PC-9 (cell line): ENCODE measurements at regions of chr11 and their contacts with region 1.

Region 1: GRCh38 chr11:64778508-64779346 is at the start of gene SF1:
- DNase-seq: peak; percentile 100
- H3K4me3 ChIP-seq: peak within 1 kb of the TSS; percentile 98
- H3K27ac ChIP-seq: peak within 1 kb of the TSS; percentile 86
- H3K4me1 ChIP-seq: peaks cover 26% of the 10 kb centered on the region
- H3K27me3 ChIP-seq: no peaks in the 10 kb centered on the region
- CTCF ChIP-seq: 0 out of 2 replicates have a peak, but pooled peaks have one; percentile 2
- total RNA-seq, gene SF1: 253 and 336 TPM in 2 replicates

Region 2: GRCh38 chr11:64665411-64665821 is 113.3 kb before region 1 on chr11:
- CTCF ChIA-PET with region 1: no interaction called
- POLR2A ChIA-PET with region 1: no interaction called
- intact Hi-C with region 1: no loop called
- DNase-seq: peak; percentile 53 to 65
- H3K4me3 ChIP-seq: no peak overlapping the region
- H3K27ac ChIP-seq: no peak overlapping the region
- H3K4me1 ChIP-seq: no peaks in the 10 kb centered on the region
- H3K27me3 ChIP-seq: peaks cover 15% of the 10 kb centered on the region
- CTCF ChIP-seq: no peak

Region 3: DNA sequence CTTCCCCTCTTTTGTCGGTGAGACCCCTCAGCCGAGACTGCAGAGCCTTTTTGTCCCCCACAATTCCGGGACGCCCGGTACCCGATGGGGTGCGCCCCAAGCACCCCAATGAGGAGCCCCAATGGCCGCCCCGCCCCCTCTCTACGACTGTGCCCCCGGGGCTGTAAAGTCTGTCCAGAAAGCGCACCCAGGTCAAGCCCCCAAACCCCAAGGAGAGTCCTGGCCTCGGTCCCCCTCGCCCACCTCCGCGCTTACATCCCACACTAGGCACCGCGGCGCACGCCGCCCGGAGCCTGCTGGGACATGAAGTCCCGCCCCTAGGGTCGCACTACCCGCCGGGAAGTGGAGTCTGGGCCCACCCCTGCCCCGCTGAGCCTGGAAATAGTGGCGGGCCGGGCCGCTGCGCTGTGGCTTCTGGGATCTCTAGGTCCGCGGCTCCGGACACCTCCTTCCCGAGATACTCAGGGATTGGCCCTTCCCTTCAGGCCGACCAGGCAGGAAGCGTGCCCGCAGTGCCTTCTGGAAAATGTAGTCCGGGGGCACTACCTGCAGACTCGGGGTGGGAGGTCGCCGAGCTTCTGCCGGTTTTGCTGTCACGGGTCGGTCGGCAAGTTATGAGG is 31.7 kb after region 1 on chr11 and contains the start of gene MEN1:
- CTCF ChIA-PET with region 1: no interaction called
- POLR2A ChIA-PET with region 1: no interaction called
- intact Hi-C with region 1: loop called (anchors 2 kb)
- DNase-seq: peak; percentile 91 to 98
- H3K4me3 ChIP-seq: peak within 1 kb of the TSS; percentile 93
- H3K27ac ChIP-seq: no peak within 1 kb of the TSS
- H3K4me1 ChIP-seq: peaks cover 6% of the 10 kb centered on the region; the same call in 1 of the 2 replicates
- H3K27me3 ChIP-seq: no peaks in the 10 kb centered on the region
- CTCF ChIP-seq: no peak
- total RNA-seq, gene MEN1: 48.7 and 61.6 TPM in 2 replicates

Region 4: DNA sequence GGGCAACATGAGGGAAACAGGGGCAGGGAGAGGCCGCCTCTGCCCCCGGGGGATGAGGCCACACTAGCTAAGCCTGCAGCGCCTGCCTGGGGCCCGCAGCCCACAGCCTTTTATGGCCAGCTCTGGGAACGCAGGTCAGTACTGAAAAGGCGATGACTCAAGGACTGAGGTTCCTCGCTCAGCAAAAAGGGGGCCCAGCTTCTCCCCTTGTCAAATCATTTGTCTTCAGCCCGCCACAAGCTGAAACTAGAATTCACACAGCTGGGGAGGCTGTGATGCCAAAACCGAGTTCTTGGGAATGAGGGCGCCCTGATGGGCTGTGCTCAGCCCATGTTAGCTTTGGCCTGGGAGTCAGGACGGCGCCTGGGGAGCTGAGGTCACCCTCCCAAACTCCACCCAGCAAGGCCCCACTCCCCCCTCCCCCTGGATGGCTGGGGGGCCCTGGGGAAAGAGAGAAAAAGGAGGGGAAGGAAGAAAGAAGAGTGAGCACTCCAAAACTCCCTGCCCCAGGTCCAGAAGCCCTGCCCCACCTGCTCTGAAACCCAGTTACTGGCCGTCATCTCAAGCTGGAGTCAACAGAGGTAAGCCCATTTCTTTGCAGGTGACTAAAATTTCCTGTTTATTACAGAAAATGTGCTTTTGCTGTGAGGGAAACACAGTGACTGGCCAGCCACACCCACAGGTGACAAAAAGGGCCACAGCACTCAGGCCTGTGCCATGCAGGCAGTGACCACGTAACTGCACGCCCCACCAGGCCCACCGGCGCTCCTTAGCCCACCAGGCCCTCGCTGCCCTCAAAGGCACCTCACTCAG is 86.0 kb after region 1 on chr11:
- CTCF ChIA-PET with region 1: interaction called, 3 read pairs
- POLR2A ChIA-PET with region 1: interaction called, 16 read pairs
- intact Hi-C with region 1: no loop called
- DNase-seq: peak in 1 of 2 experiments; percentile 79
- H3K4me3 ChIP-seq: no peak overlapping the region
- H3K27ac ChIP-seq: no peak overlapping the region
- H3K4me1 ChIP-seq: peaks cover 41% of the 10 kb centered on the region
- H3K27me3 ChIP-seq: no peaks in the 10 kb centered on the region
- CTCF ChIP-seq: no peak

Region 5: DNA sequence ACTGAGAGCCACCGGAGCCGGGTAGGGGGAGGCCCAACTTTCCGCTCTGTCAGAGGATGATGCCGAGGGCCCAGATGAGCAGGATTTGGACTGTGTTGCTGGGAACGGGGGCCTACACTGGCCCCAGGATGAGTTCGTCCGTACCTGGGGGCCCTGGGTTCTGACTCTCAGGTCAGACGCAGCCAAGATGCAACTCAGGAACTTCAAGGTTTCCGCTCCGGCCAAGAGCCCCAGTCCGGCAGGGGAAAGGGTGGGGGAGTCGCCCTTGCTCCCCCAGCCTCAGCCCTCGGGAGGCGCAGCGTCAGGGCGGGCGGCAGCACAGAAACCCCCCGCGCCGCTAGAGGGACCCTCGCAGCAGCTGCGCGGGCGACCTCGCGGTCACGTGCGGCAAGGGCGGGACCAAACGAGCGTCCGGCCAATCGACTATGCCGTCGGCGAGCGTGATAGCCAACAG is 235.0 kb after region 1 on chr11:
- CTCF ChIA-PET with region 1: no interaction called
- POLR2A ChIA-PET with region 1: no interaction called
- intact Hi-C with region 1: loop called (anchors 10 kb)
- DNase-seq: peak in 1 of 2 experiments; percentile 80
- H3K4me3 ChIP-seq: peak overlapping the region; percentile 76
- H3K27ac ChIP-seq: peak overlapping the region; percentile 71
- H3K4me1 ChIP-seq: peaks cover 14% of the 10 kb centered on the region
- H3K27me3 ChIP-seq: no peaks in the 10 kb centered on the region
- CTCF ChIP-seq: peak; percentile 75

Region 6: DNA sequence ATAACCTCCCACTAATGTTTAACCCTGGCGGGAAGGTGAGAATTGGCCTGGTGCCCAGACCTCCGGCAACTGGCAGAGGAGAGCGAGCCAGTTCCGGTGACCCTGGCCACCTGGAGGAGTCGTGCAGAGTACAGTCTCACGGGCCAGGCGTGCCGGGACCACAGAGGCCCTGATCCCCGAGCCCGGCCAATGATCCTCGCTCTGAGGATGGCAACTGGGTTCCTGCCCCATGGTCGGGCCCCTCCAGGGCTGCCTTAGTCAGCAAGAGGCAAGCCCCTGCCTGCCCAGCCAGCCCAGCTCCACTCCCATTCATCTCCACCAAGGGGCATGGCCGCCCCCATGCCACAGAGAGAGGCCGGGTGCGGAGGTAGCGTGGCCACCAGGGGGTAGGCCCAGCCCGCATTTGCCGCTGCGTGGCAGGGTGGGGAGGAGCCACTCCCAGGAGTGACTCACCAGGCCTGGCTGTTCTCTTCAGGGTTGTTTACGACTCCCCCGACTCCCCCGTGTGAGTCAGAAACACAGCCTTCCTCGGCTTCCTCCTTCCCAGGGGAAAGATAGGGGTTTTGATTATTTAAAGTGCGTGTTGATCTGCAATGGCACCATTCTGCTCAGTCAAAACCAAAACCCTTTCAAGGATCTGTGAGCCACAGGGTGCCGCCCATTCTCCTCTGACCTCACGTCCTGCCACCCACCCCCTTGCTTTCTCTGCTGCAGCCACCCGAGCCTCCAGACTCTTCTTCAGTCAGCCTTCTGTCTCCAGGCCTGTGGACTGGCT is 603.5 kb after region 1 on chr11 and contains the start of gene SLC25A45:
- CTCF ChIA-PET with region 1: interaction called, 21 read pairs
- POLR2A ChIA-PET with region 1: interaction called, 4 read pairs
- intact Hi-C with region 1: no loop called
- DNase-seq: peak; percentile 97 to 98
- H3K4me3 ChIP-seq: peak within 1 kb of the TSS; percentile 48; the same call in 1 of the 2 replicates
- H3K27ac ChIP-seq: peak within 1 kb of the TSS; percentile 93
- H3K4me1 ChIP-seq: peaks cover 64% of the 10 kb centered on the region
- H3K27me3 ChIP-seq: no peaks in the 10 kb centered on the region
- CTCF ChIP-seq: peak; percentile 79
- total RNA-seq, gene SLC25A45: 9.5 and 9.8 TPM in 2 replicates

Region 7: GRCh38 chr11:66386171-66387069 is 1607.7 kb after region 1 on chr11:
- CTCF ChIA-PET with region 1: interaction called, 15 read pairs
- POLR2A ChIA-PET with region 1: no interaction called
- intact Hi-C with region 1: no loop called
- DNase-seq: peak; percentile 79 to 82
- H3K4me3 ChIP-seq: peak overlapping the region; percentile 37; the same call in 1 of the 2 replicates
- H3K27ac ChIP-seq: no peak overlapping the region
- H3K4me1 ChIP-seq: no peaks in the 10 kb centered on the region
- H3K27me3 ChIP-seq: peaks cover 6% of the 10 kb centered on the region; the same call in 1 of the 2 replicates
- CTCF ChIP-seq: peak; percentile 97